SK-N-SH (cell line): ENCODE measurements at regions of chr3 and their contacts with region 1.

Region 1: DNA sequence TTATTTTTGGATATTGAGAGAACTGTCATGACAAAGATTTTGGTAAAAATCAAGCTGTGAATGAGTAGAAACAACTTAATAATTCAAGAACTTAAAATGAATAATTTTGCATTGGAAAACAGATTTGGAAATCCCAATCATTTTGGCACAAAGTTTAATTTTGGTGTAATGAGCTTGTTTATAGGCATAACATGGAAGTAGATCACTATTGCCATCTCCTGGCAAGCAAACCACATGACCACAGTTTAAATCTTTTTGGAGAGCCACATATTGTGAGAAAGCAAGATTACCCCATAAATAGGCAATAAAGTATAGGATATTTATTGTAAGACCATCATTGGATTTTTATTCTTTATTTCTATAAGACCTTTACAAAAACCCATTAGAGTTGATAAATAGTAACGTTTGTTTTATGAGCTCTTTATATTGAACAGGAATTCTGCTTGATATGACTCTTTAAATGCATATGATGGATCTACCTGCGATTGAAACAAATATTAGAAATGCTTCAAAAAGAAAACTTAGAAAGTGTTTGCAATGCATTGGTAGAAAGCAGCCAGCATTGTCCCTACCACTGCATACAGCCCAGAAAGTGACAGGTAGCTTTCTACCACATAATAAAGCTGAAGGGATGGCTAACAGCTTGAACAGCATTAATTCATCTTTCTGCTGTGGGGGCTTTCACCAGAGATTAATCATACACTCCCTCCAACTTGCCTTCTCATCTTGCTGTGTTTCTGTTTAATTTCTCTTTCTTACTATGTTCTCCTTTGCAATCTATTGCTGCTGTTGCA is 766.8 kb downstream of the TBL1XR1 start:
- DNase-seq: peak; percentile 39
- H3K4me3 ChIP-seq: no peak overlapping the region
- H3K27ac ChIP-seq: no peak overlapping the region
- H3K4me1 ChIP-seq: no peaks in the 10 kb centered on the region; a peak in 2 of 4 replicates
- H3K27me3 ChIP-seq: no peaks in the 10 kb centered on the region
- CTCF ChIP-seq: peak; percentile 71
- EP300 ChIP-seq: no peak
- RAD21 ChIP-seq: peak; percentile 87

Region 2: GRCh38 chr3:176415701-176416191 is 14.7 kb before region 1 on chr3:
- CTCF ChIA-PET with region 1: interaction called, 11 read pairs
- POLR2A ChIA-PET with region 1: no interaction called
- DNase-seq: no peak
- H3K4me3 ChIP-seq: no peak overlapping the region
- H3K27ac ChIP-seq: no peak overlapping the region
- H3K4me1 ChIP-seq: peaks cover 0 to 2% of the 10 kb centered on the region in 2 experiments; a peak in 1 of 4 replicates
- H3K27me3 ChIP-seq: no peaks in the 10 kb centered on the region
- CTCF ChIP-seq: no peak
- EP300 ChIP-seq: no peak
- RAD21 ChIP-seq: no peak

Region 3: GRCh38 chr3:176663837-176664831 is 233.7 kb after region 1 on chr3:
- CTCF ChIA-PET with region 1: interaction called, 14 read pairs
- POLR2A ChIA-PET with region 1: no interaction called
- DNase-seq: peak; percentile 29
- H3K4me3 ChIP-seq: no peak overlapping the region
- H3K27ac ChIP-seq: peak overlapping the region in 1 of 2 experiments; percentile 22; a peak in 1 of 4 replicates
- H3K4me1 ChIP-seq: peaks cover 0 to 5% of the 10 kb centered on the region in 2 experiments; a peak in 2 of 4 replicates
- H3K27me3 ChIP-seq: no peaks in the 10 kb centered on the region
- CTCF ChIP-seq: peak; percentile 48
- EP300 ChIP-seq: no peak
- RAD21 ChIP-seq: peak; percentile 81